Psoas muscle (tissue), 8 donors: ENCODE measurements at regions of chr4 and their contacts with region 1.

Region 1: GRCh38 chr4:37891260-37892159 is 626 bp downstream of the TBC1D1 start:
- DNase-seq: peak in 1 of 2 donors; percentile 74
- ATAC-seq: peak; percentile 38 to 55 (median 51)
- H3K4me3 ChIP-seq: peak overlapping the region; percentile 94
- H3K27ac ChIP-seq: peak overlapping the region; percentile 76
- H3K4me1 ChIP-seq: peaks cover 3% of the 10 kb centered on the region
- H3K27me3 ChIP-seq: no peaks in the 10 kb centered on the region
- CTCF ChIP-seq: no peak

Region 2: GRCh38 chr4:37490391-37491347 is 400.8 kb before region 1 on chr4:
- intact Hi-C with region 1: no loop called
- DNase-seq: no peak
- ATAC-seq: no peak
- H3K4me3 ChIP-seq: no peak overlapping the region
- H3K27ac ChIP-seq: no peak overlapping the region
- H3K4me1 ChIP-seq: no peaks in the 10 kb centered on the region
- H3K27me3 ChIP-seq: no peaks in the 10 kb centered on the region
- CTCF ChIP-seq: no peak

Region 3: DNA sequence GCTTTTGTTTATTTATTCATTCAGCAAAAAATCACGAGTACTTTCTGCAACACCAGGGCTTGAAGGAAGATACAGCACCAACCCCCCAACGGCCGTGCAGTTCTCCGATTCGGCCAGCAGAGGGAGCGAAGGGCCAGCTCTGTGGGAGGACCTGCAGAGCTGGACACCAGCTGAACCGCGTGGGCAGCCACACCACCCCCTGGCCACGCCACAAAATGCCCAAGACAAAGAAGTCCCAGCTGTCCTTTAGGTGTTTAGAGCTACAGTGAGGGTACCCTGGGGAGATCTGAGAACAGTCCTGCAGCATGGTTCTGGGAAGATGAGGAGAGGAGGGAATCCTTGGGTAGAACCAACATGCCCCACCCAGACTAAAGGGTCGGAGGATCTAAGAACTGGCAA is 288.4 kb before region 1 on chr4:
- intact Hi-C with region 1: loop called in 1 of 2 experiments (anchors 5 kb)
- DNase-seq: peak; percentile 82 to 92
- ATAC-seq: peak; percentile 95 to 99 (median 97)
- H3K4me3 ChIP-seq: no peak overlapping the region
- H3K27ac ChIP-seq: no peak overlapping the region
- H3K4me1 ChIP-seq: no peaks in the 10 kb centered on the region
- H3K27me3 ChIP-seq: no peaks in the 10 kb centered on the region
- CTCF ChIP-seq: peak; percentile 99

Region 4: DNA sequence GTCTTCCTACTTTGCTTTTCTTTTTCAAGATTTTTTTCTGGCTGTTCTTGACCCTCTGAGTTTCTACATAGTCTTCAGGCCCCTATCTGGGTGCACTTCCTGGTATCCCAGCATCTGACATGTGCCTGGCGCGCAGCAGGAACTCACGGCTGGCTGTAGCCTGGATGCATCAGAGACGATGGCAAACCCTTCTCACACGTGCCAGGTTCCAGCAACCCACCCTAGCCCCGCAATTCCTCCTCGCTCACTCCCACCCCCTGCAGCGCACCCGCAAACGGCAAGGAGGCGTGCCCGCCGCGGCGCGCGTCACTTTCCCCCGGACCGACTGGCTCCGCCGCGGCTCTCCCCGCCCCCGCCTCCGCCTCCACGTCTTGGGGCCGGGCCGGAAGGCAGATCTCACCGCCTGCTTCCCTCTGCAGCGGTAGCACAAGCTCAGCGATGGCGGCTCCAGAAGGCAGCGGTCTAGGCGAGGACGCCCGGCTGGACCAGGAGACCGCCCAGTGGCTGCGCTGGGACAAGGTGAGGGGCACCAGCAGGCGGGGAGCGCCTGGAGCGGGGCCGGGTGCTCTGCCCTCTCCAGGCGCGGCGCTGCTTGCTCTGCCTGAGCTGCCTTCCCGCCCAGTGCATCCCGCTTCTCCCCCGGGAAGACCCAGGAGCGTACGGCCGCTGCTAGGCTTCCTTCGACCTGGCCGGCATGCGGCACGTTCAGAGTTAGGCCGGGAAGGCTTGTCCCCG is 65.0 kb before region 1 on chr4 and contains the start of gene PGM2:
- intact Hi-C with region 1: loop called in 1 of 2 experiments (anchors 2 kb)
- DNase-seq: peak; percentile 86 to 91
- ATAC-seq: peak; percentile 91 to 98 (median 94)
- H3K4me3 ChIP-seq: peak within 1 kb of the TSS; percentile 93
- H3K27ac ChIP-seq: peak within 1 kb of the TSS; percentile 78
- H3K4me1 ChIP-seq: peaks cover 12% of the 10 kb centered on the region
- H3K27me3 ChIP-seq: no peaks in the 10 kb centered on the region
- CTCF ChIP-seq: no peak
- total RNA-seq, gene PGM2: 2.5 to 4.7 (median 4.0) TPM

Region 5: DNA sequence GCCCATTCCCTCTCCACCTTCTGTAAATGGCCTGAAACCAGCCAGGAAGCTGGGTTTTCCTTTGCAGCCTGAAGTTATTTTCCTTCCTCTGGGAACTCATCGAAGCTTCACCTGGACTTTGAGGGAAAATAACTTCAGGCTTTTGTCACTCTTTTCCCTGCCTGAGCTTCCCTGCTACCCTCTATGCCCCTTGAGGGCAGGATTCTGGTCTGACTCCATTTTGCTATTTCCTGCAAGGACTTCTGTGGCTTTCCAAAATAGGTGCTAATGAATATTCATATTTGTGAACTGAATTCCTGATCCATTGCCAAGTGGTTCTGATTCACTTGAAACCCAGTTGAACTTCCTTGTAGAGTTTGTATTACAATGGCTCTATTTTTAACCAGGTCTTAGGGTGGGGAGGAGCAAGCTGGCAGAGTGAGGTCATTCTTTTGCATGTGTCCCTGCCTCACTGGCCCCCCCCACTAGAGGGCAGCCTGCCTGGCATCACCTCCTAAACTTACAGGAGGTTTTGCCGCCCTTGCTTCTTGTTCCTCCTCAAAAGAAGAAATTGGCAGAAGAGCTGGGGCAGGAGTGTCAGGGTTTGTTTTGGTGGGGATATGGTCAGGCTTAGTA is 79.1 kb after region 1 on chr4:
- intact Hi-C with region 1: loop called (anchors 5 kb)
- DNase-seq: peak; percentile 81 to 90
- ATAC-seq: peak; percentile 94 to 98 (median 96)
- H3K4me3 ChIP-seq: no peak overlapping the region
- H3K27ac ChIP-seq: peak overlapping the region; percentile 66
- H3K4me1 ChIP-seq: peaks cover 36% of the 10 kb centered on the region
- H3K27me3 ChIP-seq: no peaks in the 10 kb centered on the region
- CTCF ChIP-seq: peak; percentile 58

Region 6: DNA sequence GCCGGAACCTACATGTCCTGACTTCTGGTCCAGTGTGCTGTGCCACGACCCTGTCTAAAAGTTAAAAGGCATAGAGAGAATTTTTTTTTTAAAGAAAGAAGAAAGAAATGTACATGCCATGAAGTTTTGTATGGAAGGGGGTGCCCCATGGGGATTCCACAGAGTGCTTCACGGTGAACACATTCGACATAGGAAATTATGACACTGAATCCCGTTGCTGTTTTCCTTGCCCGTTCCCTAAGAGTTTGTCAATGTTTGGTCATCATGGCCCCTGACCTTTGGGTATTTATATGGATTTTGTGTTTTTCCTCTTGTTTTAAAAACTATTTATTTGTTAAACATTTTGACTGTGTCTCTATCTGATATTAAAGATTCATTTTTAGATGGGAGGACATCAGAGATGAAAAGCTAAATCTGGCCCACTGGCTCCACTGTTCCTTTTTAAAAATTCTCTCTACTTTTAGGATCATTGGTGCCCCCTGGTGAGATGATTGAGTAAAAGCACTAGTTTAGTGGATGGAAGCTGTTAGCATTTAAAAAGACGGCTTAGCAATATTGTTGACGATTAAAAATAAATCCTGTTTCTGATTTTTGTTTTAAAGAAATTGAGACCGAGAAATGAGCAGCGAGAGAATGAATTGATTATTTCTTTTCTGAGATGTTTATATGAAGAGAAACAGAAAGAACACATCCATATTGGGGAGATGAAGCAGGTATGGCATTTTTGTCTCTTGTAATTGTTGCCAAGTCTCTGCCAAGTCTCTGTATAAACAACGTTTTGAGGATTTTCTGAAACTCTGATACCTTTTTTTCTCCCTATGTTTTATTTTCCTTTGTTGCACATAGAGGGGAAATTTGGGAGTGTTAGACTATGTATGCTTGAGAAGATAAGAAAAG is 143.7 kb after region 1 on chr4:
- intact Hi-C with region 1: loop called in 1 of 2 experiments (anchors 5 kb)
- DNase-seq: no peak
- ATAC-seq: peak in 2 of 4 donors; percentile 59 to 82
- H3K4me3 ChIP-seq: no peak overlapping the region
- H3K27ac ChIP-seq: no peak overlapping the region
- H3K4me1 ChIP-seq: no peaks in the 10 kb centered on the region
- H3K27me3 ChIP-seq: no peaks in the 10 kb centered on the region
- CTCF ChIP-seq: peak; percentile 67